Upper lobe of right lung (tissue), 1 donor: ENCODE measurements at regions of chr9 and their contacts with region 1.

Region 1: GRCh38 chr9:98074115-98074990 is 17.8 kb downstream of the NANS start:
- DNase-seq: peak; percentile 74
- ATAC-seq: peak; percentile 85
- H3K4me3 ChIP-seq: no peak overlapping the region
- H3K27ac ChIP-seq: peak overlapping the region; percentile 51
- H3K4me1 ChIP-seq: peaks cover 21% of the 10 kb centered on the region
- H3K27me3 ChIP-seq: no peaks in the 10 kb centered on the region
- CTCF ChIP-seq: peak; percentile 98

Region 2: GRCh38 chr9:98118640-98119601 is 44.6 kb after region 1 on chr9 and contains the start of gene TRIM14:
- intact Hi-C with region 1: no loop called
- DNase-seq: peak; percentile 93
- ATAC-seq: peak; percentile 91
- H3K4me3 ChIP-seq: peak within 1 kb of the TSS; percentile 86
- H3K27ac ChIP-seq: peak within 1 kb of the TSS; percentile 84
- H3K4me1 ChIP-seq: peaks cover 15% of the 10 kb centered on the region
- H3K27me3 ChIP-seq: no peaks in the 10 kb centered on the region
- CTCF ChIP-seq: peak; percentile 11
- total RNA-seq, gene TRIM14: 38.7 TPM

Region 3: GRCh38 chr9:98255578-98256296 is 181.4 kb after region 1 on chr9 and contains the start of gene TBC1D2:
- intact Hi-C with region 1: loop called (anchors 10 kb)
- DNase-seq: peak; percentile 98
- ATAC-seq: peak; percentile 95
- H3K4me3 ChIP-seq: peak within 1 kb of the TSS; percentile 90
- H3K27ac ChIP-seq: peak within 1 kb of the TSS; percentile 99
- H3K4me1 ChIP-seq: peaks cover 33% of the 10 kb centered on the region
- H3K27me3 ChIP-seq: no peaks in the 10 kb centered on the region
- CTCF ChIP-seq: peak; percentile 26
- total RNA-seq, gene TBC1D2: 71.8 TPM